OCI-LY7 (cell line): ENCODE measurements at regions of chr1 and their contacts with region 1.

Region 1: GRCh38 chr1:34742667-34743270 is 12.1 kb upstream of the GJB5 start:
- DNase-seq: peak; percentile 72
- H3K4me3 ChIP-seq: no peak overlapping the region
- H3K27ac ChIP-seq: no peak overlapping the region
- H3K4me1 ChIP-seq: no peaks in the 10 kb centered on the region
- CTCF ChIP-seq: peak; percentile 88

Region 2: DNA sequence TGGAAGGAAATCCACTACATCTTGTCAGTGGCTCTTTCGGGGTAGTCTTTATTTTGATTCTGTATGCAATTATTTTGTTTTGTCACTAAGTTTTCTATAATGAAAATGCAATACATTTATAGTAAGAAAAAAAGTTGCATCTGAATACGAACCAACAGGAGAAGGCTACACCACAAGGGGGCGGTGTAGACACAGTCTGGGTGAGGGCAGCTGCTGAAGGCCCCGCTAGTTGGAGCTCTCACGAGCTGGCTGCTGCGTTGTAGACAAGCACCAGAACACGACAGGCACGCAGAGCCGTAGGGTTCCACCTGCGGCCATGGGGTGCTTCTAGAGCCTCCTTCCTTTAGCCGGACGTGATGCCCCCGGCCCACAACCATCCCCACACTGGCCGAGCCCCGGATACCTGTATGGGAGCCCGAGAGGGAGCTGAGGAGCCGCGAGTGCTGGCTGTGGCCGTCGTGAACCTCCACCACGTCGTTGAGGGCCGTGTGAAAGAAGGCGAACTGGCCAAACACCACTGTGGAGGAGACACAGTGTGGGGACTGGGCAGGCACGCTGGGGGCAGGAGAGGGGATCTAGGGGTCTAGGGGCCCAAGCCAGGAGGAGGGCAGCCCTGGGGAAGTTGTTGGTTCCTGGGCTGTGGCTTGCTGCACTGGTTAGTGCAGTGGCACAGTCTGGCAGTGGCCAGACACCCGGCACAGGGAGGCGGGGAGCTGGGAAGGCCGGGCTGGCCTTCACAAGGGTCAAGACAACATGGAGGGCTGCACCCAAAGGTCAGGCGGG is 1109.6 kb before region 1 on chr1:
- CTCF ChIA-PET with region 1: no interaction called
- POLR2A ChIA-PET with region 1: no interaction called
- intact Hi-C with region 1: loop called (anchors 5 kb)
- DNase-seq: peak; percentile 83
- H3K4me3 ChIP-seq: no peak overlapping the region
- H3K27ac ChIP-seq: no peak overlapping the region
- H3K4me1 ChIP-seq: no peaks in the 10 kb centered on the region
- CTCF ChIP-seq: peak; percentile 99

Region 3: DNA sequence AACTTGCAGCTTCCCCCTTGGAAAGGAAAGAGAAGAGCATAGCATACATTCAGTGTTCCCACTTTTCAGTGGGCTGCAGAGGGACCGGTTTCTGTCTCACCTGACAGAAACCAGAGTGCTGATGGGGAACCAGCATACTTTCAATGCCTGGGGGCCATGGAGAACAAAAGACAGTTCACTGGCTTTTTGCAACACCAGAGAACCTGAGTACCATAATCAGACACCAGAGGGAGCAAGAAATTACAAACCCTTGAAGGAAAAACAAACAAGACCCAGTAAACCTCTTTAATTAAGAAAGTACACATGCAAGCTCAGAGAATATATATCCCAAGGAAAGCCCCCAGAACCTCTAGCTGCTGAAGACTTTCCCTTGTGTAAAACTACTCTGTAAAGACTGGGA is 628.9 kb before region 1 on chr1:
- CTCF ChIA-PET with region 1: no interaction called
- POLR2A ChIA-PET with region 1: no interaction called
- intact Hi-C with region 1: loop called (anchors 10 kb)
- DNase-seq: peak; percentile 42
- H3K4me3 ChIP-seq: no peak overlapping the region
- H3K27ac ChIP-seq: no peak overlapping the region
- H3K4me1 ChIP-seq: peaks cover 22% of the 10 kb centered on the region
- CTCF ChIP-seq: peak; percentile 50

Region 4: DNA sequence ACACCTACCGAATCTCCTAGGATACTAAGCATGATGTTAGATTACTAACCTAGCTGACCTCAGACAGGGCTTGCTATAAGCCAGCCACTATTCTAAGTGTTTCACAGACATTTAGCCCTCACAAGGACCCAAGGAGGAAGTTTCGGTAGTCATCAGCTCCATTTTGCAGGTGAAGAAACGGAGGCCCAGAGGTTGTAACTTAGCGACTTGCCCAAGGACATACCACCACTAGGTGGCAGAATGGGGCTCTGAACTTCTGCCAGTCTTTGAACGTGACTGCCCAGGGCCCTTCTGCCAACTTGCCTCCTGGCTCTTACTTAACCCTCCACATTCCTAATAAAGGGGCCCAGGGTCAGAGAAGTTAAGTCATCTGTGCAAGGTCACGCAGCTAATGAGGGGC is 282.6 kb before region 1 on chr1:
- CTCF ChIA-PET with region 1: no interaction called
- POLR2A ChIA-PET with region 1: no interaction called
- intact Hi-C with region 1: loop called (anchors 1 kb)
- DNase-seq: peak; percentile 46
- H3K4me3 ChIP-seq: no peak overlapping the region
- H3K27ac ChIP-seq: no peak overlapping the region
- H3K4me1 ChIP-seq: no peaks in the 10 kb centered on the region
- CTCF ChIP-seq: peak; percentile 78

Region 5: GRCh38 chr1:34786521-34787325 is 44.0 kb after region 1 on chr1:
- CTCF ChIA-PET with region 1: interaction called, 17 read pairs
- POLR2A ChIA-PET with region 1: no interaction called
- intact Hi-C with region 1: no loop called
- DNase-seq: peak; percentile 68
- H3K4me3 ChIP-seq: no peak overlapping the region
- H3K27ac ChIP-seq: no peak overlapping the region
- H3K4me1 ChIP-seq: no peaks in the 10 kb centered on the region
- CTCF ChIP-seq: peak; percentile 86